ENCODE measurements at regions of chr7 and their contacts with region 1.

Region 1: GRCh38 chr7:45136106-45137060 is 21.2 kb upstream of the RAMP3 start:
- DNase-seq: peak; percentile 50
- ATAC-seq: peak; percentile 75 to 80

Region 2: DNA sequence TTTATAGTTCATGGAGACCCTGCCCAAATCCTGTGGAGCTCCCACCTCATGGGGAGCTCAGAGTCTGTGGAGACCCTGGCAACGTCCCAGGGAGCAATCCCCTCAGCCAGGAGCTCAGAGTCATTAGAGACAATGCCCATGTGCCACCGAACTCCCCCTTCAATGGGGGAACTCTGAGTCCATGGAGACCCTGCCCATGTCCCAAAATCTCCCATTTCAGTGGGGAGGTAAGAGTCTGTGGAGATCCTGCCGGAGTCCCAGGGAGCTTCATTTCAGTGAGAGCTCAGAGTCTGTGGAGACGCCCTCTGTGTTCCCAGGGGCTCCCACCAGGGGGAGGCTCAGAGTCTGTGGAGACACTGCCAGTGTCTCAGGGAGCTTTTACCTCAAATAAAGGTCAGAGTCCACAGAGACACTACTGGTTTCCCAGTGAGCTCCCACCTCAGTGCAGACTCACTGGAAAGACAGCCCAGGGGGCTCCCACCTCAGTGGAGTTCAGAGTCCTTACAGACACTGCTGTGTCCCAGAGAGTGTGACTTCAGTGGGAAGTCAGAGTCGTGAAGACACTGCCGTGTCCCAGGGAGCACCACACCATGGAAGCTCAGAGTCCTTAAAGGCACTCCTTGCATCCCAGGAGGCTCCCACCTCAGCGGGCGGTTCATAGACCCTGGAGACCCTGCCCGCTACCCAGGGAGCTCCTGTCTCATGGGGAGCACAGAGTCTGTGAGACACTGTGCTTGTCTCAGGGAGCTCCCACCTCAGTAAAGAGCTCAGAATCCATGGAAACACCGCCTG is 162.6 kb before region 1 on chr7:
- intact Hi-C with region 1: loop called (anchors 5 kb)
- DNase-seq: no peak
- ATAC-seq: peak in 1 of 2 donors; percentile 45

Region 3: GRCh38 chr7:45089341-45089891 is 47.0 kb before region 1 on chr7:
- intact Hi-C with region 1: no loop called
- DNase-seq: peak; percentile 61
- ATAC-seq: peak; percentile 39 to 53